ENCODE measurements at regions of chr2 and their contacts with region 1.

Region 1: DNA sequence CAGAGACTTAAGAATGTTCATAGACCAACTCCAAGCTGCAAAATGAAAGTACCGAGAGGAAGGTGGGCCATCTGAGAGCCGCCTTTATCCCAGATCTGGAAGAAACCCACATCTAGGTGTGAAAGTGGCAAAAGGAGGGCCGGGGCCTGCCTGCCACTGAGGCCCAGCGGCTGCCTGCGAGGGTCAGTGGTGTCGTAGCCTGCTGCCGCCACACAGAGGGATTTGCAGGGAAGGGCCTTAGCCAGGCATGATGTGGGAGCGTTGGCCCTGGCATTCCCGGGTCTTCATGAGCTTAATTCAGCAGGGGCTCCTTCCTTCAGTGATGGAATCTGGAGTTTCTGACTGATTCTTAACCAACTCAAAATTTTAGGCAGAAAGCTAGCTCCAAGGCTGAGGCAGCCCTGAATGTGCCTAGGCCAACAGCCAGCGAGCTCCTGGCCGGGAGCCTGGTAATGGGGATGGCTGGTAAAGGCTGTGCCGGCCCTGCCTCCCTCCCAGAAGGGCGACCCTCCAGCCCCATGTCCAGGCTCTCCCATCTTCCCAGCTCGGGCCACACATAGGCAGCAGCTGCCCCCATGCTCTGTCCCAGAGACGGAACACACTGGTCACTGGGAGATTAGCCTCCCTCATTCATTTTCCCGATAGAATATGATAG is 230.1 kb downstream of the AGAP1 start:
- DNase-seq: no peak
- H3K4me3 ChIP-seq: no peak overlapping the region
- H3K27ac ChIP-seq: no peak overlapping the region
- H3K4me1 ChIP-seq: no peaks in the 10 kb centered on the region
- H3K27me3 ChIP-seq: no peaks in the 10 kb centered on the region
- CTCF ChIP-seq: no peak

Region 2: GRCh38 chr2:235627682-235628081 is 96.3 kb before region 1 on chr2:
- CTCF ChIA-PET with region 1: no interaction called
- dilution Hi-C with region 1: loop called (anchors 5 kb)
- in situ Hi-C with region 1: no loop called
- intact Hi-C with region 1: no loop called
- DNase-seq: no peak
- H3K4me3 ChIP-seq: no peak overlapping the region
- H3K27ac ChIP-seq: no peak overlapping the region
- H3K4me1 ChIP-seq: no peaks in the 10 kb centered on the region
- H3K27me3 ChIP-seq: no peaks in the 10 kb centered on the region
- CTCF ChIP-seq: no peak

Region 3: GRCh38 chr2:235820571-235820970 is 96.6 kb after region 1 on chr2:
- CTCF ChIA-PET with region 1: no interaction called
- dilution Hi-C with region 1: no loop called
- in situ Hi-C with region 1: no loop called
- intact Hi-C with region 1: no loop called
- DNase-seq: peak; percentile 3
- H3K4me3 ChIP-seq: no peak overlapping the region
- H3K27ac ChIP-seq: no peak overlapping the region
- H3K4me1 ChIP-seq: no peaks in the 10 kb centered on the region
- H3K27me3 ChIP-seq: no peaks in the 10 kb centered on the region
- CTCF ChIP-seq: no peak